Activated naive CD4-positive, alpha-beta T cell treated with anti-CD3 and anti-CD28 coated beads, Interleukin-2, amount 10 ng/mL, durations not matched to agents 7 days and 5 days (primary cell): ENCODE measurements at regions of chr21 and their contacts with region 1.

Region 1: GRCh38 chr21:43938751-43939442 is 73.2 kb upstream of the TRAPPC10 start:
- DNase-seq: peak; percentile 94
- H3K4me3 Mint-ChIP-seq: peak overlapping the region; percentile 79
- H3K27ac Mint-ChIP-seq: peak overlapping the region; percentile 81
- H3K4me1 Mint-ChIP-seq: peaks cover 16% of the 10 kb centered on the region
- H3K27me3 Mint-ChIP-seq: no peaks in the 10 kb centered on the region

Region 2: GRCh38 chr21:43619856-43620255 is 319.0 kb before region 1 on chr21:
- CTCF ChIA-PET with region 1: no interaction called
- DNase-seq: no peak
- H3K4me3 Mint-ChIP-seq: no peak overlapping the region
- H3K27ac Mint-ChIP-seq: no peak overlapping the region
- H3K4me1 Mint-ChIP-seq: peaks cover 3% of the 10 kb centered on the region
- H3K27me3 Mint-ChIP-seq: peaks cover 10% of the 10 kb centered on the region

Region 3: DNA sequence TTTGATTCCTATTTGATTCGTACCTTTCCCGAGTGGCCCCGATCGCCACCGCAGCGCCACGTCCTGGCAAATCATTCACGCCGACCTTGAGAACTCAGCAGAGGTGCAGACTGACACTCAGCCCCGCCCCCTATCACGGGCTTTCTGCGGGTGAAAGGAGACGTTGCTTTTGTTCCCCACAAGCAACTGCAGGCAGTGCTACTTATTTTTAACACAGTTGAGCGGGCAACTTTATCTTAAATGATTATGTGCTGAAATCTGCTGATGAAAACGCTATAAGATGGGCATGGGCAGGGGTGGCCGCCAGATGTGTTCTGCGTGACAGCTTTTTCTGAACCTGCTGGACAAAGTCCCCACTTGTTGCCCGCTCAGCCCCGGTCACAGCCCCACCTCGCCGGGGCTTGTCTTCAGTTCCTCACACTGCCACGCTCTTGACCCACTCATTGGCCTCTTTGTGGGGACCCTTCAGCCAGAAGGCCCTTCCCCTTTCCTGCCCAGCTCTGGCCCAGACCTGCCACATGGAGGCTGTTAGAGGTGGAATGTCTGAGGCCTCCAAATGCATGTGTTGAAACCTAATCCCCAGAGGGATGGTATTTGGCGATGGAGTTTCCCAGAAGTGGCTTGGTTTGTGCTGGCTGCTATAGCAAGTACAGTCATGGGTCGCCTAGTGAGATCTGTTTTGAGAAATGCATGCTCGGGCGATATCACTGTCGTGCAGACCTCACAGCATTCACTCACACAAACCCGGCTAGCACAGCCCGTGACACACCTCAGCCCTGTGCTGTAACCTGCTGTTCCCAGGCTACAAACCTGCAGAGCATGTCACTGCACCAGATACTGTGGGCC is 235.6 kb before region 1 on chr21:
- CTCF ChIA-PET with region 1: no interaction called
- DNase-seq: peak; percentile 58
- H3K4me3 Mint-ChIP-seq: no peak overlapping the region
- H3K27ac Mint-ChIP-seq: no peak overlapping the region
- H3K4me1 Mint-ChIP-seq: peaks cover 25% of the 10 kb centered on the region
- H3K27me3 Mint-ChIP-seq: peaks cover 24% of the 10 kb centered on the region

Region 4: GRCh38 chr21:43925096-43925481 is 13.8 kb before region 1 on chr21:
- CTCF ChIA-PET with region 1: interaction called, 23 read pairs
- DNase-seq: no peak
- H3K4me3 Mint-ChIP-seq: no peak overlapping the region
- H3K27ac Mint-ChIP-seq: no peak overlapping the region
- H3K4me1 Mint-ChIP-seq: peaks cover 36% of the 10 kb centered on the region
- H3K27me3 Mint-ChIP-seq: no peaks in the 10 kb centered on the region